GM12878 (cell line): ENCODE measurements at regions of chr5 and their contacts with region 1.

Region 1: GRCh38 chr5:127313847-127314473 is 23.4 kb downstream of the MEGF10 start:
- DNase-seq: no peak
- ATAC-seq: peak; percentile 97
- H3K4me3 ChIP-seq: no peak overlapping the region
- H3K27ac ChIP-seq: no peak overlapping the region
- H3K4me1 ChIP-seq: no peaks in the 10 kb centered on the region
- H3K27me3 ChIP-seq: no peaks in the 10 kb centered on the region; a peak in 1 of 4 replicates
- CTCF ChIP-seq: peak; percentile 80 to 86 (median 83)
- EP300 ChIP-seq: no peak
- POLR2A ChIP-seq: no peak
- RAD21 ChIP-seq: peak; percentile 80

Region 2: GRCh38 chr5:126837906-126838539 is 475.9 kb before region 1 on chr5:
- CTCF ChIA-PET with region 1: interaction called, 10 read pairs
- POLR2A ChIA-PET with region 1: no interaction called
- RAD21 ChIA-PET with region 1: interaction called, 5 read pairs
- SMC1A ChIA-PET with region 1: interaction called, 9 read pairs
- in situ Hi-C with region 1: no loop called
- intact Hi-C with region 1: no loop called
- DNase-seq: no peak
- ATAC-seq: no peak; the same call in 2 of the 3 replicates
- H3K4me3 ChIP-seq: no peak overlapping the region
- H3K27ac ChIP-seq: no peak overlapping the region
- H3K4me1 ChIP-seq: no peaks in the 10 kb centered on the region
- H3K27me3 ChIP-seq: no peaks in the 10 kb centered on the region
- CTCF ChIP-seq: peak in 1 of 3 experiments; percentile 36; a peak in 1 of 6 replicates
- EP300 ChIP-seq: no peak
- POLR2A ChIP-seq: no peak
- RAD21 ChIP-seq: peak; percentile 36; the same call in 1 of the 2 replicates

Region 3: DNA sequence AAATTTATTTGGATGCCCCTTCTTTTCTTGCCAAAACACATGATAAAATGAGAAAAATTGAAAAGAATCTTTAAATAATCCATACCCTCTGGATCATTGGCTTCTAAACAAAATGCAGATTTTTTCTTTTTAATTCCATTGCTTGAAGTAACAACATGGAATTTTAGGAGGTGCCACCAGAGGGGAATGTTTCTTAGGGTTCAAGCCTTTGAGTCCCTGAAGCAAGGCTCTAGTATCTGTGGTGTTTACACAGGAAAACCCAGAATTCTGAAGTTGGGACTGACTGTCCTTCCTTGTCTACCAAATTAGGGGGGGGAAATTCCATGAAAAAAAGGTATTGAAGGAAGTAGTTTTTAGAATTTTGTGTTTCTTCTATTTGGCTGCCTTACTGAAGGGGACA is 467.6 kb before region 1 on chr5:
- CTCF ChIA-PET with region 1: interaction called, 3 read pairs
- POLR2A ChIA-PET with region 1: no interaction called
- RAD21 ChIA-PET with region 1: no interaction called
- SMC1A ChIA-PET with region 1: no interaction called
- in situ Hi-C with region 1: loop called (anchors 10 kb)
- intact Hi-C with region 1: loop called (anchors 5 kb)
- DNase-seq: no peak
- ATAC-seq: no peak
- H3K4me3 ChIP-seq: no peak overlapping the region
- H3K27ac ChIP-seq: no peak overlapping the region
- H3K4me1 ChIP-seq: no peaks in the 10 kb centered on the region; the same call in 1 of the 2 replicates
- H3K27me3 ChIP-seq: no peaks in the 10 kb centered on the region
- CTCF ChIP-seq: peak in 1 of 3 experiments; percentile 18; a peak in 1 of 6 replicates
- EP300 ChIP-seq: no peak
- POLR2A ChIP-seq: no peak
- RAD21 ChIP-seq: peak; percentile 19; the same call in 1 of the 2 replicates

Region 4: GRCh38 chr5:126852091-126852571 is 461.8 kb before region 1 on chr5:
- CTCF ChIA-PET with region 1: interaction called, 3 read pairs
- POLR2A ChIA-PET with region 1: no interaction called
- RAD21 ChIA-PET with region 1: no interaction called
- SMC1A ChIA-PET with region 1: no interaction called
- in situ Hi-C with region 1: loop called (anchors 10 kb)
- intact Hi-C with region 1: loop called (anchors 5 kb)
- DNase-seq: peak; percentile 23
- ATAC-seq: peak; percentile 85
- H3K4me3 ChIP-seq: no peak overlapping the region
- H3K27ac ChIP-seq: peak overlapping the region; percentile 53; the same call in 1 of the 2 replicates
- H3K4me1 ChIP-seq: peaks cover 12% of the 10 kb centered on the region
- H3K27me3 ChIP-seq: no peaks in the 10 kb centered on the region
- CTCF ChIP-seq: no peak
- EP300 ChIP-seq: no peak
- POLR2A ChIP-seq: no peak
- RAD21 ChIP-seq: no peak

Region 5: DNA sequence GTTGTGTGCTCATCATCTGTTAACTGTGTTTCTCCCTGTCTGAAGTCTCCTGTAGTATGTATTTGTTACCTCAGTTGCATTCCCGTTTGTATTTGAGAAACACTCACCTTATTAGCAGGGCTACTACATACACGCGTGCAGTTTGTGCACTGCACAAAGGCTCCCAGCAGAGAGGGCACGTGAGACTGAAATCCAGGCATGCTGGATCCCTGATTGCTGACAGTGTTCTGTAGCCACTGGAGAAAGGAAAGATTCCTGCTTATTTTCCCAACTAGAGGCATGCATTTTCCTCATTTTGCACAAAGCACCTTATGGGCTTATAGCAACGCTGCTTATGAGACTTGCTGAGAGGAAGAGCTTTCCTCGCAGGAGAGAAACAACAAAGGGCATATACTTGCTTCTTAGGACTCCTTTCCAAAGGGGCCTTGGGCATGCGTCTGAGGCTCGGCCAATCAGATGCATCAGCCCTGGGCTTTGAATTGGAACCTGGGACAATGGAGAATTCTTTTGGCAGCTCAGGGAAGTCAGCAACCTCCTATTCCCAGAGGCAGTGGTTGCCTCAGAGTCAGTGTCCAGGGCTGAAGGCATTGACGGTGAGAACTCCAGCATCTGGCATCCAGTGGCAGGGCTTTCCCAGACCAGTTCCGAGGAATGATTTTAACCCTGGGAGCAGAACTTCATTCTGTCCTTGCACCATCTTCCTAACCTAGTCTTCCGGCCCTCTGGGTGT is 33.3 kb before region 1 on chr5:
- CTCF ChIA-PET with region 1: no interaction called
- POLR2A ChIA-PET with region 1: no interaction called
- RAD21 ChIA-PET with region 1: no interaction called
- SMC1A ChIA-PET with region 1: no interaction called
- in situ Hi-C with region 1: no loop called
- intact Hi-C with region 1: no loop called
- DNase-seq: no peak
- ATAC-seq: no peak
- H3K4me3 ChIP-seq: no peak overlapping the region
- H3K27ac ChIP-seq: no peak overlapping the region
- H3K4me1 ChIP-seq: no peaks in the 10 kb centered on the region
- H3K27me3 ChIP-seq: no peaks in the 10 kb centered on the region; a peak in 2 of 4 replicates
- CTCF ChIP-seq: no peak
- EP300 ChIP-seq: no peak
- POLR2A ChIP-seq: no peak
- RAD21 ChIP-seq: no peak

Region 6: DNA sequence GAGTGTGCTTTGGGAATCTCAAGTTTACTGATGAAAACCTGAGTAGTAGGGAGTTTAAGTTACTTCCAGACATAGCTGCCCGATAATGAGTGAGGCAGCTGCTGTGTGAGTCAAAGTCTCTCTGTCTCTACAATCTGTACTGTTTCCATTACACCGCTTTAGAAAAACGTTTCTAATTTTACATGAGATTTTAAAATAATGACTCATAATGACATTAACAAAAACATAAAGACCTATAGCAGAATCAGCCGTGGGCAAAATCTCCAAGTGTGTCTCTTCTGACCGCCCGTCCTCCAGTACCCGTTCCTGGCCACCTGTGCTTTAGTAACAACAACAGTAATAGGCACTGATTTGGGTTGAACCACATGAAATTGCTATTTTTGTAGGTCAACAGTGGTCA is 133.9 kb after region 1 on chr5:
- CTCF ChIA-PET with region 1: no interaction called
- POLR2A ChIA-PET with region 1: no interaction called
- RAD21 ChIA-PET with region 1: no interaction called
- SMC1A ChIA-PET with region 1: no interaction called
- in situ Hi-C with region 1: no loop called
- intact Hi-C with region 1: no loop called
- DNase-seq: no peak
- ATAC-seq: no peak
- H3K4me3 ChIP-seq: no peak overlapping the region
- H3K27ac ChIP-seq: no peak overlapping the region
- H3K4me1 ChIP-seq: no peaks in the 10 kb centered on the region
- H3K27me3 ChIP-seq: no peaks in the 10 kb centered on the region
- CTCF ChIP-seq: no peak
- EP300 ChIP-seq: no peak
- POLR2A ChIP-seq: no peak
- RAD21 ChIP-seq: no peak

Region 7: DNA sequence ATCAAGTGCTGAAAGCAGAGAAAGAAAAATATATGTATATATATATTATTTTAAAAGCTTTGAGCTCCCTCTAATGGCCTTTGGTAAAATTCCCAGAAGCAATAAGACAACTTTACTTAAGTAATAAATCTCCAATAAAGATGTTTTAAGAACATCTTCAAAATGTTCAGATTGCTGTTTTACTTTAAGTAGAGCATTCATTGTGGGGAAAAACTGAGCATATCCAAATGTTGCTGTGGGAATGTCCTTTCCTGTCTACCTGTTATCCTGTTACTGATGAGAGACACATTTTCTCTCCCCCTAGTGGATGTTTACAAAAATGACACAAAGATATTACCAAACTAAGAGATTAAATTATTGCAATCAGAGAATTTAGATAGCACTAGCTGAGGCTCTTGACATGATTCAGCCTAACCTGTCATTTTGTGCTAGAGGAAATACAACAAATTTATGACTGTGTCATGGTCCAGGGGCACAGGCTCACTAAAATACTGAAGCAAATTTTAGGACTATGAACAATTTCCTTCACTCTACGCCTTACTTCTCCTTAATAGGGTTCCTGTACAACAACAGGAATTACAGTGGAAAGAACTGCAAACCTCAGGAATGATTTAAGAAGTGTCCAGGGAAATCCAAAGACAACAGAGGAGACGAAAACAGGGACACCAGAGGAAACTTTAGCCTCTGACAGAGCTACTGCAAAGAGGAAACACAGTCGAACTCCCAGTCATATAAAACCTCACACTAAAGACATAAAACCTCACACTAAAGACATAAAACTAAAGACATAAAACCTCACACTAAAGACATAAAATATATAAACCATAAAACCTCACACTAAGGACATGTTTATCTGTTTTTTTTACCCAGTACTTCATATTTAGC is 179.1 kb after region 1 on chr5:
- CTCF ChIA-PET with region 1: interaction called, 11 read pairs
- POLR2A ChIA-PET with region 1: no interaction called
- RAD21 ChIA-PET with region 1: no interaction called
- SMC1A ChIA-PET with region 1: interaction called, 3 read pairs
- in situ Hi-C with region 1: no loop called
- intact Hi-C with region 1: no loop called
- DNase-seq: peak; percentile 26
- ATAC-seq: peak; percentile 75
- H3K4me3 ChIP-seq: no peak overlapping the region
- H3K27ac ChIP-seq: no peak overlapping the region
- H3K4me1 ChIP-seq: no peaks in the 10 kb centered on the region
- H3K27me3 ChIP-seq: no peaks in the 10 kb centered on the region
- CTCF ChIP-seq: peak; percentile 57 to 66 (median 64)
- EP300 ChIP-seq: no peak
- POLR2A ChIP-seq: no peak
- RAD21 ChIP-seq: peak; percentile 22; the same call in 1 of the 2 replicates